ENCODE measurements at regions of chr12 and their contacts with region 1.

Region 1: GRCh38 chr12:14613718-14614117 is 46.0 kb upstream of the PLBD1 start:
- DNase-seq: peak; percentile 82 to 91 (median 87)
- H3K4me3 ChIP-seq: peak overlapping the region in 1 of 3 experiments; percentile 37
- H3K4me3 Mint-ChIP-seq: peak overlapping the region in 1 of 2 donors; percentile 30
- H3K27ac ChIP-seq: peak overlapping the region; percentile 53 to 80
- H3K27ac Mint-ChIP-seq: peak overlapping the region; percentile 85 to 98 (median 93)
- H3K4me1 ChIP-seq: peaks cover 41 to 55% of the 10 kb centered on the region in 2 donors
- H3K4me1 Mint-ChIP-seq: peaks cover 48% of the 10 kb centered on the region
- H3K27me3 ChIP-seq: no peaks in the 10 kb centered on the region
- H3K27me3 Mint-ChIP-seq: peaks cover 0 to 6% (median 0%) of the 10 kb centered on the region in 3 donors
- CTCF ChIP-seq: no peak

Region 2: GRCh38 chr12:14567351-14568162 is 46.2 kb before region 1 on chr12 and contains the start of gene PLBD1:
- intact Hi-C with region 1: loop called (anchors 5 kb)
- DNase-seq: peak; percentile 62 to 64 (median 63)
- H3K4me3 ChIP-seq: peak within 1 kb of the TSS; percentile 51 to 85 (median 64)
- H3K4me3 Mint-ChIP-seq: peak within 1 kb of the TSS; percentile 85 to 94
- H3K27ac ChIP-seq: peak within 1 kb of the TSS; percentile 95 to 96
- H3K27ac Mint-ChIP-seq: peak within 1 kb of the TSS; percentile 90 to 97 (median 96)
- H3K4me1 ChIP-seq: peaks cover 56 to 69% of the 10 kb centered on the region in 2 donors
- H3K4me1 Mint-ChIP-seq: peaks cover 68% of the 10 kb centered on the region
- H3K27me3 ChIP-seq: no peaks in the 10 kb centered on the region
- H3K27me3 Mint-ChIP-seq: no peaks in the 10 kb centered on the region
- CTCF ChIP-seq: no peak
- polyA plus RNA-seq, gene PLBD1: 317 to 876 (median 543) TPM

Region 3: DNA sequence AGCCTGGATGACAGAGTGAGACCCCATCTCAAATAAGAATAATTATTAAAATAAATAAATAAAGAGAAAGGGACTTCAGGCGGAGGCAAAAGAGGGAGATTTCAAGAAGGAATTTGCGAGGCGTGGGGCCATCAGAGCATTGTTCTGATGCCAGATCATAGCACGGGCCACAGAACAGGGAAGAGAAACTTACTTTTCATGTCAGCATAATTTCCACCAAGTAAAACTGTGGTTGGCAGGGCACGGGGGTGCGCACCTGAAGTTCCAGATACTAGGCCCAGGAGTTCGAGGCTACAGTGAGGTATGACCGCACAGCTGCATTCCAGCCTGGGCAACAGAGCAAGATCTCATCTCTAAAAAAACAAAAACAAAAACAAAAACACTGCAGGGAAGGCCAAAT is 35.1 kb before region 1 on chr12:
- intact Hi-C with region 1: no loop called
- DNase-seq: peak in 1 of 3 donors; percentile 23
- H3K4me3 ChIP-seq: peak overlapping the region in 1 of 3 experiments; percentile 42
- H3K4me3 Mint-ChIP-seq: peak overlapping the region in 1 of 2 donors; percentile 78
- H3K27ac ChIP-seq: peak overlapping the region; percentile 63
- H3K27ac Mint-ChIP-seq: peak overlapping the region; percentile 62 to 92 (median 85)
- H3K4me1 ChIP-seq: peaks cover 56 to 60% of the 10 kb centered on the region in 2 donors
- H3K4me1 Mint-ChIP-seq: peaks cover 62% of the 10 kb centered on the region
- H3K27me3 ChIP-seq: no peaks in the 10 kb centered on the region
- H3K27me3 Mint-ChIP-seq: peaks cover 0 to 1% (median 0%) of the 10 kb centered on the region in 3 donors
- CTCF ChIP-seq: no peak

Measured in CD14-positive monocyte (primary cell).